Activated T-helper 1 cell treated with anti-CD3 and anti-CD28 coated beads, Interleukin-12 subunit alpha, Interleukin-12 subunit beta, Interleukin-2, Interleukin-4 antibody, amounts not matched to agents 30 ng/mL and 10 ng/mL and 1 ng/mL, durations not matched to agents 14 hours and 24 hours and 36 hours (primary cell): ENCODE measurements at regions of chr6 and their contacts with region 1.

Region 1: DNA sequence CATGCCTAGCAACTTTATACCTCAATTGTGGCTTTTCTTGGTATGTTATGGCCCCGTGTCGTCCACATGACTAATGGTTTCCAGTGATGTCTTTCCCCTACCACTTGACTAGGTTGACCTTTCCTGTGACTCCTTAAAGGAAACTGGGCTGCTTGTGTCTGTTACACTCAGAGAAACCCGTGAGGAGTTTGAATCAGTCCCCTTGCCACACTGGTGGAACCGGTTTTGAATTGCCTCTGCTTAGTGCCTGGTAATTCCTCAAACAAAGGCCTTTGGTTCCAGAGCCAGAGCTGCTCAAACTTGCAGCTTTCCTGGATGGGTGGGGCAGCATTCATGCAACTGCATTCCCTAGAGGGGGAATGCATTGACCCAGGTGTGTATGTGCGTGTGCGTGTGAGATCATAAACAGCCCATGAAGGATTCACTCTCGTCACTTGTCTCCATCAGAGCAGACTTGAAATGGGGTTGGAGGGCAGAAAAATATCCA is 22.0 kb downstream of the ECT2L start:
- DNase-seq: no peak
- H3K4me3 Mint-ChIP-seq: no peak overlapping the region
- H3K27ac Mint-ChIP-seq: peak overlapping the region; percentile 78
- H3K4me1 Mint-ChIP-seq: peaks cover 36% of the 10 kb centered on the region
- H3K27me3 Mint-ChIP-seq: no peaks in the 10 kb centered on the region

Region 2: DNA sequence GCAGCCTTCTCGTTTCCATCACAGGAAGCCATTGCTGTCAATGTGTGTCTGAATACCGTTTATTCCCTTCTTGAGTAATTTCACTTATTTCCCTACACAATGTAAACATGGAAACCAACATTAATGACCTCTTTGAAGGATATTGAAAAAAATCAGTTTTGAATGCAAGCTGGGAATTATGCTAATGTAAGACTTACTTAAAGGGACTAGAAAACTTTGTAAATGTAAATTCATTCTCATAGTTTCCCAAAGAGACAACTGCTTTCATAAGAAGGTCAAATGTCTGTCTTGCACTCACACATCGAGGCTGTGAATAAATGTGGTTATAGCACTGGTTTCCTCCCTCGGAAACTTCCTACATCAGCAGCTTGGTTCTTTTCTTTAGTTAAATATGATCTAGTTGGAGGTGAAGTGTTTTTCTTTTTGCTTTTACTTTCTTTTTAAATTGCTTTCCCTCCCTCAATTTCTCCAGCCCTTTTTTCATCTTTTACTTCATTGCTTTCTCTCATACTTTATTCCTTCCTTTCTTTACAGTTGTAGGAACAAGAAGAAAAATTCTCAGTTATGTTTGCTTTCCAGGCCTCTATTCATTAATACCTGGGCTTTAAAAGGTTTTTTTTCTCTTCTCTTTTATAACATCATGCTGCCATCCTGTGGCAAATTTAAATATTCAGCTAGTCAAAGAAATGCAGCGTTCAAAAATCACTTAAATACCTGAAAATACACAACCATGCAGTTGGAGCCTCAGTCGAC is 842.5 kb before region 1 on chr6:
- intact Hi-C with region 1: no loop called
- DNase-seq: peak; percentile 39
- H3K4me3 Mint-ChIP-seq: peak overlapping the region; percentile 69
- H3K27ac Mint-ChIP-seq: peak overlapping the region; percentile 91
- H3K4me1 Mint-ChIP-seq: peaks cover 71% of the 10 kb centered on the region
- H3K27me3 Mint-ChIP-seq: no peaks in the 10 kb centered on the region

Region 3: DNA sequence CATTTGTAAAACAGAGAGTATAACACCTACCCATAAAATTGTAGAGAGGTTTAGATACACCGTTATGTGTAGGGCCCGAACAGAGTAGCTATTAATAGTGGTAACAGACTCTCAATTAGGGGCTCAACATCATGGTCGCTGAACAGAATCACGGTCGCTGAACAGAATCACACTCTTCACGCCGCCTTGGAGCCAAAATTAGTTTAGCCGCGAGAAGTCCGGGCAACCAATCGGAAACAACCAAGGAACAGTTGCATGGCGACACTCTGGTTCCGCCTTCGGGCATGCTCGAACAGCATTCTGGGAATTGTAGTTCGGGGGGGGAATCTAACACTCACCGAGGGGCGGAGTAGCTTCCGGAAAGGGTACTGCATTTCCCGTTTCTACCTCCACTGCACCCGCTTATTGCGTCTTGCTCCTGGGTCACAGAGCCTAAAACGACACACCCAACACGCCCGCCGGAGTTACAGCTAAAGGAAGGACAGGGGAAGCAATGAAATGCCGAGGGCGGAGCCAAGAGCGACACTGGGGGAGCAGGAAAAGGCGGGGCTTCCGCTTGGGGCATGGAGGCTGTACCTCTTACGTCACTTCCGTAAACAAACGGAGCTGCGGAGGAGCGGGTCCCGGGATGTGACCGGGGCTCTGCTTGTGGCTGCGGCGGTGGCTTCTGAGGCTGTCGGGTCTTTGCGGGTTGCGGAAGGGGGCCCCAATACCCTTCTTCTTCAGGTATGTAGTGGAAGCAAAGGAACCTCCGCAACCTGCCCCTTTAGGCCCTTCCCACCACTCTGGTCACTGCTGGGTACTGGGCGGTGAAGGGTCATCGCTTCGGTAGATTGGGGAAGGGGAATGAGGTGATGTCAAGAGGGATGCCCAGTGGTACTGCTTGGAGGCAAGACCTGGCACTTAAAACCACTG is 44.4 kb before region 1 on chr6 and contains the start of gene CCDC28A:
- intact Hi-C with region 1: loop called (anchors 2 kb)
- DNase-seq: peak; percentile 89
- H3K4me3 Mint-ChIP-seq: peak within 1 kb of the TSS; percentile 99
- H3K27ac Mint-ChIP-seq: peak within 1 kb of the TSS; percentile 100
- H3K4me1 Mint-ChIP-seq: peaks cover 23% of the 10 kb centered on the region
- H3K27me3 Mint-ChIP-seq: no peaks in the 10 kb centered on the region
- total RNA-seq, gene CCDC28A: 16.1 and 17.9 TPM in 2 replicates

Region 4: DNA sequence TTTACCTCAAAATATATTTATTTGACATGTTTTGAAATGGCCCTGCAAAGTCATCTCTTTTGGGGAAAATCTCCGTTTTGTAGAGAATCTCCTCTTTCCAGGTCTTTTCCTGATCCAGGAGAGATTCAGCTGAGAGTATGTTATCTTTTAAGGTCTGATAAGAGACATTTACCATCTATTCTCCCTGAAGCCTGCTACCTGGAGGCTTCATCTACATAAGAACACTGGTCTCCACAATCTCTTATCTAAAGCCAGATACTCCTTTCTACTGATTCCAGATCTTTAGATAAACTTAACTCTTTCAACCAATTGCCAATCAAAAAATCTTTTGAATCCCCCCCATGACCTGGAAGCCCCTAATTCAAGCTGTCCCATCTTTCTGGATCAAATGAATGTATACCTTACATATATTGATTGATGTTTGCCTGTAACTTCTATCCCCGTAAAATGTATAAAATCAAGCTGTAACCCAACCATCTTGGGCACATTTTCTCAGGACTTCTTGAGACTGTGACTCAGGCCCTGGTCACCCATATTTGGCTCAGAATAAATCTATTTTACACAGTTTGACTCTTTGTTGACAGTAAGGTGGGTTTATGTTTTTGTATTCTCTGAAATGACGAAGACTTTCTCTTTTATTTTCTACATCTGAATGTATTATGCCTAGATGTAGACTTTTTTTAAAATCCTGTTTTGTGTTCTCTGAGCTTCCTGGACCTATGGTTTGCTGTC is 73.6 kb after region 1 on chr6:
- intact Hi-C with region 1: loop called (anchors 5 kb)
- DNase-seq: no peak
- H3K4me3 Mint-ChIP-seq: no peak overlapping the region
- H3K27ac Mint-ChIP-seq: peak overlapping the region; percentile 10
- H3K4me1 Mint-ChIP-seq: no peaks in the 10 kb centered on the region
- H3K27me3 Mint-ChIP-seq: no peaks in the 10 kb centered on the region

Region 5: GRCh38 chr6:138944412-138944811 is 126.5 kb after region 1 on chr6:
- intact Hi-C with region 1: loop called (anchors 2 kb)
- DNase-seq: peak; percentile 21
- H3K4me3 Mint-ChIP-seq: peak overlapping the region; percentile 17
- H3K27ac Mint-ChIP-seq: peak overlapping the region; percentile 53
- H3K4me1 Mint-ChIP-seq: peaks cover 63% of the 10 kb centered on the region
- H3K27me3 Mint-ChIP-seq: no peaks in the 10 kb centered on the region

Region 6: DNA sequence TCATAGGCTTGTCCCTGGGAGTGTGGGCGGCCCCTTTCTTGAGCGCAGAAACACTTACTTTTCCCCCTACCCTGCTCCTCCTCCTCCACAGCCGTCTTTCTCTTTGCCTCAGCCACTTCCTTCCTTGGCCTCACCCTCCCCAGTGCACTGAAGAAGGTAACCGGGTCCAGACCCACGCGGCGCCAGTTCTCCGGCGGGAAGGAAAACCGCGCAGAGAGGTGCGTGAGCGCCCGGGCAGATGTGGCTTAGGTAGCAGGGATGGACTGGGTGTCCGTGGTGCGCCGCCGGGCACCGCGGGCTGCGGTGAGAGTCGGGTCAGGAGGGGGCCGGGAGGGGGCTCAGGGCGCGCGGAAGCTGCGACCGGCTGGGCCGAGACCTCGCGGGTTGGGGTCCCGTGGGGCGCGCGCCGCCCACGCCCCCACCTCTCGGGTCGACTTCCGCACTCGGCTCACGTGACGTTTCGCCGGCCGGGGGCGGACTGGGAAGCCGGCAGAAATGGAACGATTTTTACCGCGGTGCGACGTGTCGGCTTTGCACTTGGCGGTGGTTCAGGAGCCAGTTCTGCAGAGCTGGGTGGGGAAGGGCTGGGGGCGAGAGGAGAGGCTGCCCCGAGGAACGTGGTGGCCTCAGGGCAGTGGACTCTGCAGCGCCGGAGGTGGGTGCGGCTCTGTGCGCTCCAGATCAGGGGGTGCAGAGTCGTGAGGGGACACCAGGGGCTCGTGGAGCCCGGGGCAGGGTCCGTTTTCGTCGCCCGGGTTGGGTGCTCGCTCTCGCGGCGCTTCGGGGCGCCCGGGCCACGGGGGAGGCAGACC is 211.0 kb after region 1 on chr6 and contains the start of gene ABRACL:
- intact Hi-C with region 1: loop called (anchors 2 kb)
- DNase-seq: peak; percentile 73
- H3K4me3 Mint-ChIP-seq: peak within 1 kb of the TSS; percentile 93
- H3K27ac Mint-ChIP-seq: peak within 1 kb of the TSS; percentile 82
- H3K4me1 Mint-ChIP-seq: peaks cover 29% of the 10 kb centered on the region
- H3K27me3 Mint-ChIP-seq: no peaks in the 10 kb centered on the region
- total RNA-seq, gene ABRACL: 129 and 135 TPM in 2 replicates

Region 7: GRCh38 chr6:139124887-139125672 is 307.2 kb after region 1 on chr6:
- intact Hi-C with region 1: loop called (anchors 5 kb)
- DNase-seq: peak; percentile 77
- H3K4me3 Mint-ChIP-seq: peak overlapping the region; percentile 47
- H3K27ac Mint-ChIP-seq: peak overlapping the region; percentile 92
- H3K4me1 Mint-ChIP-seq: peaks cover 33% of the 10 kb centered on the region
- H3K27me3 Mint-ChIP-seq: no peaks in the 10 kb centered on the region

Region 8: DNA sequence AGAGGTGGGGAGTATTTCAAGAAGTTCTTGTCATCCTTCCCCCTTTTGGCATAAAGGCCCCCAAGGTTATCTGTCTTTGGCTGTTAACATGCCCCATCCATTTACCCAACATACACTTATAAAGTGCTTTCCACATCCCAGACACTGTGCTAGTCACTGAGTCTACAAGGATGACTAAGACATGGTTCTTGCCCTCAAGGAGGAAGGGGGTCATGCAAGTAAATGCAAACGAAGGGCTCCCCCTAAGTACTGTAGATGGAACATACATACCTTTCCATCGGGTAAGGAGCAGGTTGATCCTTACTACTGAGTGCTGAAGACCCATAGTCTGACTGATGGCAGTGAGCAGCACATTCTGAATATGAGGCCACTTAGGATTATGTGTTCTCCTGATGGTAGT is 355.3 kb after region 1 on chr6:
- intact Hi-C with region 1: no loop called
- DNase-seq: no peak
- H3K4me3 Mint-ChIP-seq: no peak overlapping the region
- H3K27ac Mint-ChIP-seq: peak overlapping the region; percentile 82
- H3K4me1 Mint-ChIP-seq: peaks cover 82% of the 10 kb centered on the region
- H3K27me3 Mint-ChIP-seq: no peaks in the 10 kb centered on the region

Region 9: GRCh38 chr6:139219271-139219729 is 401.4 kb after region 1 on chr6:
- intact Hi-C with region 1: loop called (anchors 1 kb)
- DNase-seq: peak; percentile 62
- H3K4me3 Mint-ChIP-seq: peak overlapping the region; percentile 38
- H3K27ac Mint-ChIP-seq: peak overlapping the region; percentile 61
- H3K4me1 Mint-ChIP-seq: peaks cover 10% of the 10 kb centered on the region
- H3K27me3 Mint-ChIP-seq: no peaks in the 10 kb centered on the region